Calu3 (cell line): ENCODE measurements at regions of chr5 and their contacts with region 1.

Region 1: DNA sequence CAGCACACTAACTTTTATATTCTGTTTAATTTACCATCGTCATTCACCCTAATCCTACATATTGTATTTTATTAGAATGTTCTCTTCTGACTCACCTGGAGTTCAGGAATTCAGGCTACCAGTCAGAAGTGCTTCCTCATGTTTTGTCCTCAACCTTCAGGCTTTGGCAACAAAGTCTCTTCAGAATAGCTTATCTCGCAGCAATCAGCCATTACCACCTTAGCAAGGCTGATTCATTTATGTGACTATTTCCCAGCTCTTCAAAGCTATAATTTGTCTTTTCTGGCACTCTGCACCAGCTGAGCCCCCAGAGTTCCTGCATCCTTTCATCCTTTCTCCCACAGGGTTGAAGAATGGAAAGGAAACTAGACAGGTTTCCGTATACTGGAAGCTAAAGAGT is 365.5 kb upstream of the CDH18 start:
- DNase-seq: peak; percentile 7
- H3K4me3 Mint-ChIP-seq: no peak overlapping the region
- H3K27ac Mint-ChIP-seq: no peak overlapping the region
- H3K4me1 Mint-ChIP-seq: no peaks in the 10 kb centered on the region
- H3K27me3 Mint-ChIP-seq: no peaks in the 10 kb centered on the region
- CTCF ChIP-seq: no peak

Region 2: DNA sequence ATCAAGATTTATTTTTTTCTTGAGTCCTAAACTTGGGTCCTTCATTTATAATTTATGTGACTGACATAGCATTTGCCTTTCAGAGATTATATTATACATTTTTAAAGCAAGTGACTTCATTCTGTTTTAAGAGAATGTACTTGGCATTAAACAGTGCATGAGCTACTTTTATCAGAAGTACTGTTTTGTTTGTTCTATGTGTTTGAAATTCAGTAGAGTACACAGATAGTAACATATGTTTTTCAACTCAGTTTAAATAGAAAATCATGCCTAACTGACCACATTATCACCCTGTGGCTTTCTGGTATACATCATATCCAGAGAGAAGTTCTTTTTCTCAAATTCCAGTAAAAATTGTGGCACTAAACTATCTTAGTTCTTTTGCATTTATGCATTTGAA is 30.2 kb before region 1 on chr5:
- CTCF ChIA-PET with region 1: no interaction called
- intact Hi-C with region 1: no loop called
- DNase-seq: no peak
- H3K4me3 Mint-ChIP-seq: no peak overlapping the region
- H3K27ac Mint-ChIP-seq: no peak overlapping the region
- H3K4me1 Mint-ChIP-seq: no peaks in the 10 kb centered on the region
- H3K27me3 Mint-ChIP-seq: no peaks in the 10 kb centered on the region
- CTCF ChIP-seq: no peak

Region 3: DNA sequence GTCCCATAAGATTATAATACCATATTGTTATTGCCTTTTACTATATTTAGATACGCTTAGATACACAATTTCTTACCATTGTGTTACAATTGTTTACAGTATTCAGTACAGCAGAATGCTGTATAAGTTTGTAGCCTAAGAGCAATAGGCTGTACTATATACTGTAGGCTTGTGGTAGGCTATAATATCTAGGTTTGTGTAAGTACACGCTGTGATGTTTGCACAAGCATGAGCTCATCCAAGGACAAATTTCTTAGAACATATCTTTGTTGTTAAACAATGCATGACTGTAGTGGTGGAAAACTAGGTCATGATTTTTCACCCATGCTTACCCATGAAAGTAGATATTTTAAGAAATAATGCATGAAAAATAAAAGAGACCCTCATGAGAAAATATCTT is 143.9 kb after region 1 on chr5:
- CTCF ChIA-PET with region 1: no interaction called
- intact Hi-C with region 1: no loop called
- DNase-seq: no peak
- H3K4me3 Mint-ChIP-seq: no peak overlapping the region
- H3K27ac Mint-ChIP-seq: no peak overlapping the region
- H3K4me1 Mint-ChIP-seq: no peaks in the 10 kb centered on the region
- H3K27me3 Mint-ChIP-seq: no peaks in the 10 kb centered on the region
- CTCF ChIP-seq: no peak

Region 4: DNA sequence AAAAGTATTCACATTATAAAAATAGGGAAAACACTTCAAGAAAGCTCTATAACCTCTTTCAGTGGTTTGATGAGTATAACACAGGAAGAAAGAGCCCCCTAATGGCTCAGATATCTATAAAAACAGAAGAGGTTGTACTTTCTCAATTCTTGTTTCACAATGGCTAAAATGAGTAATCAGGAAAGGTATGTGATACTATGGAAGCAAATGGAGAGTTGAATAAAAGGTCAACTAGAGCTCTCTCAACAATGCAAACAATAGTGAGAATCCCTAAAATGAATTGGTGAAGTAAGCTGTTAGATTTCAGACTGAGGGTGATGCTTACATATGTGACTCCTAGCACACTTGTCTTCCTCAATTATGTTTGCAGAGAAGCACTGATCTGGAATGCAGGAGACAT is 219.1 kb after region 1 on chr5:
- CTCF ChIA-PET with region 1: no interaction called
- intact Hi-C with region 1: loop called (anchors 10 kb)
- DNase-seq: no peak
- H3K4me3 Mint-ChIP-seq: no peak overlapping the region
- H3K27ac Mint-ChIP-seq: peak overlapping the region; percentile 50
- H3K4me1 Mint-ChIP-seq: peaks cover 17% of the 10 kb centered on the region
- H3K27me3 Mint-ChIP-seq: no peaks in the 10 kb centered on the region
- CTCF ChIP-seq: no peak